Calu3 (cell line): ENCODE measurements at regions of chrX and their contacts with region 1.

Region 1: GRCh38 chrX:13398073-13398823 is 78.4 kb upstream of the ATXN3L start:
- DNase-seq: peak; percentile 86
- H3K4me3 Mint-ChIP-seq: peak overlapping the region; percentile 21
- H3K27ac Mint-ChIP-seq: peak overlapping the region; percentile 93
- H3K4me1 Mint-ChIP-seq: peaks cover 41% of the 10 kb centered on the region
- H3K27me3 Mint-ChIP-seq: no peaks in the 10 kb centered on the region
- CTCF ChIP-seq: no peak

Region 2: DNA sequence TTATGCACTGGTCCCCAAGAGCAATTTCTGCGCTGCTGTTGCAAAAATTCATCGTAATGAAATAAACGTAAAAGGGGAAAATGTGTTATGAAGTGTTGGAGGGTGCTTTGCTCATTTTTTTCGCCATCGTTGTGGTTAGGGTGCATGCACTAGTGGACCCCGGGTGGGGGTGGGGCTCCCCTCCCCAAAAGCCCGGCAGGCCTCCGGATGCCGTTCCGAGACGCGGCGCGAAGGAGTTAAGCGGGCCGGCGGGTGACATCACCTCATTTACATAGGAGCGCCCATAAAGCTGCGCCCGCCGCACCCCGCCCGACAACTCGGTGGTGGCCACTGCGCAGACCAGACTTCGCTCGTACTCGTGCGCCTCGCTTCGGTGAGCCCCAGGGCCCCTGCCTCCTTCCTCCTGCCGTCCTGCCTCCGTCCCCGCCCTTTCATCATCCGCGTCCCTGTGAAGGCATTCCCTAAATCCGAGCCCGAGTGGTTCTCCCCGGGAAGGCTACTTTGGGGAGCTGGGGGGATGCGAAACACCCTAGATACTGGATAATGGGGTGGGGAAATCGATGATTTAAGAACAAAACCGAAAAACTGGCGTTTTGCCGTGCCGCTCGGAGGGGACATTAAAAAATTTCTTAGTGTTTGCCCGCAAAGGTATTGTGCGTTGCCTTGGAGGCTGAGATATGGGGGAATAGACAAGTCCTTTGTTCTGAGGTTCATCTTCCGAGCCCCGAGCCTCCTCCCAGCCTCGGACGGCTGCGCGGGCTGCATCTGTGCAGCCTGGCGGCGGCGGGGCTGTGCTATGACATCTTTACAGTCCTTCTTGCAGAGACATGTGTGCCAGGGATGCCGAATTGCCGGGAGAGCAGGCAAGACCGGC is 423.2 kb before region 1 on chrX and contains the start of gene TMSB4X:
- CTCF ChIA-PET with region 1: no interaction called
- intact Hi-C with region 1: loop called (anchors 2 kb)
- DNase-seq: peak; percentile 90
- H3K4me3 Mint-ChIP-seq: peak within 1 kb of the TSS; percentile 85
- H3K27ac Mint-ChIP-seq: peak within 1 kb of the TSS; percentile 99
- H3K4me1 Mint-ChIP-seq: peaks cover 59% of the 10 kb centered on the region
- H3K27me3 Mint-ChIP-seq: no peaks in the 10 kb centered on the region
- CTCF ChIP-seq: no peak
- total RNA-seq, gene TMSB4X: 5,274 and 5,368 TPM in 2 replicates

Region 3: DNA sequence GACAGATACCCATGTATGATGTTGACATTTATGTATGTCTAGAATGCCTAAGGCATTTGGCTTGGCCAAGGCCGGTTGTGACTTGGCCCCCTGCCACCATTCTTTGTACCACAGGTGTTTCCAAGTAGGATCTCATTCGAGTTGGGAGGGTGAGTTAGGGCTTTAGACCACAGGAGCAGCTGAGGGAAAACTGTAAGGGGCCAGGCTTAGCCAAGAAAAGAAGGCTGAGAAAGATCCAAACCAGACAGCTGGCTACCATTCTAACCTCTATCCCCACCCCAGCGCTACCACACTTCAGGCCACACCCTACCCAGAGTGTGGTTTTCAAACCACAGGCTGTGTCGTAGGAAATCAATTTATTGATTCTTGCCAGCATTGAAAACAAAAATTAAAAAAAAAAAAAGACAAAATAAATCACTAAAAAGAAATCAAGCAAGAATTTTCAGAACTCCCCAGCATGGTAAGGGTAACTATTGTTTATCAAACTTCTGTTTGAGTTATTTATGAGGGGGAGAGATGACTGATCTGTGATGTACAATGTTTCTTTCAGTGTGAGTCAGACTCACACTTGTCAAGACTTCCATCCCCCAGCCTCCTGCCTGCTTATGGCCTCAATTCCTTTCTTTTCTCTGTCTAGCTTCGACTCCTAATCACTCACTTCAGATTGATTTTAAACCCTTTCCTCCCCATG is 413.5 kb before region 1 on chrX:
- CTCF ChIA-PET with region 1: no interaction called
- intact Hi-C with region 1: loop called (anchors 5 kb)
- DNase-seq: peak; percentile 85
- H3K4me3 Mint-ChIP-seq: peak overlapping the region; percentile 31
- H3K27ac Mint-ChIP-seq: peak overlapping the region; percentile 89
- H3K4me1 Mint-ChIP-seq: peaks cover 64% of the 10 kb centered on the region
- H3K27me3 Mint-ChIP-seq: no peaks in the 10 kb centered on the region
- CTCF ChIP-seq: no peak

Region 4: DNA sequence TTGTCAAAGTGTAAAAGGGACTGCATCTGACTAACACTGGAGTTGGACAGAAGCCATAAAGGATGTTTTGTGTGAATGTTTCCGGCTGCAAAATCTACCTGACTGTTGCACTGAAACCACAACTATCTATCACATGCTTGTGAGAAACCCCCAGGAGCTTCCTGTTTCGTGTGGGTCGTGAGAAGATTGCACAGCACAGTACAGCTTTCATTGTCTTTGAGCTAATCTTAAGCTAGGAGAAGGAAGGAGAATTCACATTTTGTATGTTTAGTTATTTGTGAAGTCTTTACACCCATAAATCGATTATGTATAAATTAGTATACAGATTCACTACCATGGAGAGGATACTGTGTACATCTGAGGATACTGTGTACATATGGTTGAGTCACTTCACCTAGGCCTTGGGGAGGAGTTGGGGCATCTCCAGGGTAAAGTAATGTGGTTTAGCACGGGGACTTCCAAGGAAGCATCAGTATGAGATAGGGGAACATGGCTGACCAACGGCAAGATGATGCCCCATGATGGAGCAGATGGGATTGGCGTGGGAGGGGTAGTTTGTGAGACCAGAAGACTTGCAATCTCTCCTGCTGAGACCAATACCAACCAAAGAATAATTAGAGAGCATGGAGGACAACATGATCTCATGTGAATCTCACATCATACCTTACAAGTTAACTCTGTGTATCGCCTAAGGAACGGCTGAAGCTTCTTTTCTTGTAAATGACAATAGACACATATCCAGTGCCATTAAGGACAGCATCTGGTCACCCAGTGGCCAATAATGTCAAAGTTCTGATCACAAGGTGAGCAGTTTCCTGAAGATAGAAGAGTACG is 310.7 kb before region 1 on chrX:
- CTCF ChIA-PET with region 1: interaction called, 3 read pairs
- intact Hi-C with region 1: loop called (anchors 5 kb)
- DNase-seq: peak; percentile 50
- H3K4me3 Mint-ChIP-seq: no peak overlapping the region
- H3K27ac Mint-ChIP-seq: peak overlapping the region; percentile 95
- H3K4me1 Mint-ChIP-seq: peaks cover 25% of the 10 kb centered on the region
- H3K27me3 Mint-ChIP-seq: no peaks in the 10 kb centered on the region
- CTCF ChIP-seq: no peak

Region 5: GRCh38 chrX:13110433-13111324 is 287.6 kb before region 1 on chrX:
- CTCF ChIA-PET with region 1: no interaction called
- intact Hi-C with region 1: loop called (anchors 1 kb)
- DNase-seq: peak; percentile 45
- H3K4me3 Mint-ChIP-seq: peak overlapping the region; percentile 48
- H3K27ac Mint-ChIP-seq: peak overlapping the region; percentile 99
- H3K4me1 Mint-ChIP-seq: peaks cover 12% of the 10 kb centered on the region
- H3K27me3 Mint-ChIP-seq: no peaks in the 10 kb centered on the region
- CTCF ChIP-seq: no peak

Region 6: GRCh38 chrX:13223868-13224555 is 174.2 kb before region 1 on chrX:
- CTCF ChIA-PET with region 1: no interaction called
- intact Hi-C with region 1: loop called (anchors 2 kb)
- DNase-seq: peak; percentile 50
- H3K4me3 Mint-ChIP-seq: peak overlapping the region; percentile 21
- H3K27ac Mint-ChIP-seq: peak overlapping the region; percentile 92
- H3K4me1 Mint-ChIP-seq: peaks cover 54% of the 10 kb centered on the region
- H3K27me3 Mint-ChIP-seq: no peaks in the 10 kb centered on the region
- CTCF ChIP-seq: no peak

Region 7: DNA sequence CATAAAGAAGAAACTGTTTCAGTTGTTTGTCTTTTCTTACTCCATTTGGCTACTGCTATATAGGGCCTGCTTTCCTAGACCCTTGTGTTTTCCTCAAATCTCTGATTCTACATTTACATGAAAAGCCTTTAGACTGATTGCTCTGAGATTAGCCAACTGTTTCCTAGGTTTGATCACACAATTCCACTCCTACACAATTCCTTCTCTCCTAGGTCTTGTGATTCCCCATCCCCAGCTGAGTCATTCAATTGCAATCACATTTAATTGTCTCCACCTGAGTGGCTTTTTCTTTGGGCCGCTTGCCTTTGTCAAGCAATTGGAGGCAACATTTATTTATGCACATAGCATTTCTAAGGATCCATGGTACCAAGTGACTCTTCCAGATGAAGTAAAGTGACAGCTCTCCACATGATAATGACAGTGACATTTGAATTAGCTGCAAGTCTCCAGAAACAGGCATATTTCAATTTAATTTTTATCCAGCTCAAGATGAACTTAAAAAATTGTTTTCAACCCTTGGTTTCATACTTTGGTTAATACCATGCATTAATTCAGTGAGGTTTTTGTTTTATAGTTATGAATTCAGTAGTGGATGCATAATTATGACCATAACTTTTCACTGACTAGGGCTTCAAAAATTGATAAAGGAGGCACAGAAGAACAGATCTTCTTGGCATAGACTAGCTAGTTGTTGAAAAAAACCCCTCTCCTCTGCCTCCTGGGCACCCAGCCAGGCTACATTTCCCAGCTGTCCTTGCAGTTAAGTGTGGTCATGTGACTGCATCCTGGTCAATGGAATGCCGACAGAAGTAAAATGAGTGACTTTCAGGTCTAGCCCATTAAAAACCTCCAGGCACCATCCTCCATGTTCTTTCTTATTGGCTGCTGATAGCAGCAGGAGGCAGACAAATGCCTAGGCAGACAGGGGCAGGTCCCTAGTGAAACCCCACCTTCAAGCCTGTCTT is 114.0 kb before region 1 on chrX:
- CTCF ChIA-PET with region 1: no interaction called
- intact Hi-C with region 1: loop called (anchors 5 kb)
- DNase-seq: no peak
- H3K4me3 Mint-ChIP-seq: no peak overlapping the region
- H3K27ac Mint-ChIP-seq: peak overlapping the region; percentile 90
- H3K4me1 Mint-ChIP-seq: peaks cover 47% of the 10 kb centered on the region
- H3K27me3 Mint-ChIP-seq: no peaks in the 10 kb centered on the region
- CTCF ChIP-seq: no peak

Region 8: GRCh38 chrX:13747836-13748235 is 349.6 kb after region 1 on chrX:
- CTCF ChIA-PET with region 1: no interaction called
- intact Hi-C with region 1: no loop called
- DNase-seq: peak; percentile 43
- H3K4me3 Mint-ChIP-seq: no peak overlapping the region
- H3K27ac Mint-ChIP-seq: peak overlapping the region; percentile 48
- H3K4me1 Mint-ChIP-seq: peaks cover 14% of the 10 kb centered on the region
- H3K27me3 Mint-ChIP-seq: no peaks in the 10 kb centered on the region
- CTCF ChIP-seq: peak; percentile 32